BJ (cell line): ENCODE measurements at regions of chr5 and their contacts with region 1.

Region 1: GRCh38 chr5:32076699-32077695 is 97.1 kb downstream of the GOLPH3 start:
- DNase-seq: no peak
- H3K4me3 ChIP-seq: no peak overlapping the region
- H3K27me3 ChIP-seq: 0 out of 2 replicates have a peak, but pooled peaks cover 2% of the 10 kb centered on the region
- CTCF ChIP-seq: peak; percentile 74

Region 2: DNA sequence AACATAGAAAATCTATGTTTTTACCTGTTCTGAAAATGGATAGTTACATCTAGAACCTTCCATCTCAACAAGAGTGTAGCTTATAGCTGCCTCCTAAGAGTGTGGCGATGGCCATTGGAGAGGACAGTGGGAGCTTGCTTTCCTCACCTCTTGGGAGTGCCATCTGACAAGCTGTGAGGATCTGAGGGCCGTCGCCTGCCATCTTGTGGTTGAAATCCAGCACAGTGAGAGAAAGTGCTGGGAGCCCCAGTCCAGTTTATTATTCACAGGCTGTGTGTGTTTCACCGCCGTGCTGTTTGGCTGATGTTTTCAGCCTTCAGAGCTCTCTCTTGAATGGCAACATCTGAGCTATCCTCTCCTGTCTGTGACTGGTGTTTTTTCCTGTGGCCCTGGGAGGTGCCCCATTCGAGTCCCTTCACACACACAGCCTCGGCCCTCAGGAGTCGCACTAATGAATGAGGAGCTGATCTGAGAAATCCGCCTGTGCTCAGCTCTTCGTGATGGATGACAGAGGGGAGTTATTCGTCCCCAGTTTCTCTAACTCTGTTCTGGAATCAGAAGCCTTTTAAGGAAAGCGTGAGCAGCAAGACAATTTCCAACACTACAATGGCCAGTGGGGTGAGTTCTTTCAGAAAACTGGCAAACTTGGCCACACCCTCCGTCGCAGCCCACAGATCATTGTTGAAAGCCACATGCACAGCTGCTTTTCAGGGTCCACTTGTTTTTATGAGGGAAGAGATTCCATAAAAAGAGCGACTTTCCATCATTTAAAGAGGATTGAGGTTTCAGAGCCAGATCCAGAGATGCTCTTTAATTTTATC is 267.7 kb before region 1 on chr5:
- CTCF ChIA-PET with region 1: interaction called, 12 read pairs
- POLR2A ChIA-PET with region 1: no interaction called
- DNase-seq: no peak
- H3K4me3 ChIP-seq: no peak overlapping the region
- H3K27me3 ChIP-seq: peaks cover 7% of the 10 kb centered on the region
- CTCF ChIP-seq: peak; percentile 73

Region 3: DNA sequence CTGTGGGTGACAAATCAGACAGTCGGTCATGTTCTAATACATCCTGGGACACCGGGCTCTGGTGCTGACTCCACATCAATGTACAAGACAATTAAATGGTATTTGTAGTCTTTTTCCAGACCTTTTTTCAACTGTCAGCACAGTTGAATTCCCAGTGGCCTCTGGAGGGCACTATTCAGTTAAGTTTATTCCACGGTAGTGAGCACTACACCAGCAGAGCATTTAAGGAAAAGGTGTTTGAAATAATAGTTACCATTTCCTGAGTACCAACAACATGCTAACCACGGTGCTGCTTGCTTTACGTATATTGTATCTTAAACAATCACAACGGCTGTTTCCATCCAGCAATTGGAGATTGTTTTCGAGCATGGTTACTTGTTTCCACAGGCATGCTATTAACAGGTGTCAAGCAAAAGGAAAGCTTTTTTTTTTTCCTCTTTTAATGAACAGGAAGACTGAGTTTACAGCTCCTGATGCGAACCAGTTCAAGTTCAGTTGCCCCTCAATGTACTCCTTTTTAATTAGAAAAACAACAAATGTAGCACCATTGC is 251.4 kb before region 1 on chr5:
- CTCF ChIA-PET with region 1: interaction called, 170 read pairs
- POLR2A ChIA-PET with region 1: no interaction called
- DNase-seq: peak; percentile 8
- H3K4me3 ChIP-seq: no peak overlapping the region
- H3K27me3 ChIP-seq: peaks cover 8% of the 10 kb centered on the region
- CTCF ChIP-seq: peak; percentile 63

Region 4: DNA sequence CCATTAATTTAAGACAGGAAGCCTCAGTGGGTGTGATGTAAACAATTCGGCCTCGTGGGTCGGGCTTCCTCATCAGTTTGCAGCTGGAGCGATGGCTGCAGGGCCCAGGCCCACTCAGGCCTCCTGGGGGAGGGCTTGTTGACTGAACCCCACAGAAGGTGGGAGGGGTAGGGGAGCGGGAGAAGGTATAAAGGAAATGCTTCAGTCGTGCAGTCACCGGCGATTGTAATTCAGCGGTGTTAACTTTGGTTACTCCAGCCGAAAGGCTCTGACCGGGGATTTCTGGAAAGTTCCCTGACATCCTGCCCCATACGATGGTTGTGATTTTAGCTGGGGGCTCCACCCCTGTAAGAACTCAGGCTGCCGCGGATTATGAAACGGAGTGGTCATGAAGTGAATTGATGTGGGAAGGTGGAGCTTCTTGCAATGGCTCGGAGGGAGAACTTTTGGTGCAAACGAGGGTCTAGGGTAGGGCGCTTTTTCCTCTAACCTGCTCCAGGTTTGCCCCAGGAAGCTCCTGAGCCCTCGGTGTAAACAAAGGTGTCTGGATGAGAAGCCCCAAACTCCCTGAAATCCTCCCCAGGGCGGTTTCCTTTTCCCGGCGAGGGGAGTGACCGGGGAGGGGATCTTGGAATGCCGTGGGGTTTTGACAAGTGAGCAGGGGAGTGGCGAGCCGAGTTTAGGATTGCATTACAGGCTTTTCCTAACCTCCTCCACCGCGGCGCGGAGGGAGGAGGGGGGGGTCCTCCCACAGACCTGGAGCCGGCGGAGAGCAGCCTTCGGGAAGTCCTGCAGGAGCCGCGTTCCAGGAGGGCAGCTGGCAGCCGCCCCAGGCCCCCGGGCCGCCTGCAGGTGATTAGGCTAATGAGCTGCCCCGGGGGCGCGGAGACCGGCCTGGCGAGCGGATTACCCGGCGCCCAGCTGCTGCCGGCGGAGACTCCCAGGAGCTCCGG is 222.5 kb before region 1 on chr5:
- CTCF ChIA-PET with region 1: interaction called, 10 read pairs
- POLR2A ChIA-PET with region 1: no interaction called
- DNase-seq: no peak
- H3K4me3 ChIP-seq: peak overlapping the region; percentile 33
- H3K27me3 ChIP-seq: peaks cover 17% of the 10 kb centered on the region
- CTCF ChIP-seq: no peak

Region 5: GRCh38 chr5:31921852-31922305 is 155.1 kb before region 1 on chr5:
- CTCF ChIA-PET with region 1: interaction called, 36 read pairs
- POLR2A ChIA-PET with region 1: no interaction called
- DNase-seq: no peak
- H3K4me3 ChIP-seq: no peak overlapping the region
- H3K27me3 ChIP-seq: no peaks in the 10 kb centered on the region
- CTCF ChIP-seq: no peak

Region 6: DNA sequence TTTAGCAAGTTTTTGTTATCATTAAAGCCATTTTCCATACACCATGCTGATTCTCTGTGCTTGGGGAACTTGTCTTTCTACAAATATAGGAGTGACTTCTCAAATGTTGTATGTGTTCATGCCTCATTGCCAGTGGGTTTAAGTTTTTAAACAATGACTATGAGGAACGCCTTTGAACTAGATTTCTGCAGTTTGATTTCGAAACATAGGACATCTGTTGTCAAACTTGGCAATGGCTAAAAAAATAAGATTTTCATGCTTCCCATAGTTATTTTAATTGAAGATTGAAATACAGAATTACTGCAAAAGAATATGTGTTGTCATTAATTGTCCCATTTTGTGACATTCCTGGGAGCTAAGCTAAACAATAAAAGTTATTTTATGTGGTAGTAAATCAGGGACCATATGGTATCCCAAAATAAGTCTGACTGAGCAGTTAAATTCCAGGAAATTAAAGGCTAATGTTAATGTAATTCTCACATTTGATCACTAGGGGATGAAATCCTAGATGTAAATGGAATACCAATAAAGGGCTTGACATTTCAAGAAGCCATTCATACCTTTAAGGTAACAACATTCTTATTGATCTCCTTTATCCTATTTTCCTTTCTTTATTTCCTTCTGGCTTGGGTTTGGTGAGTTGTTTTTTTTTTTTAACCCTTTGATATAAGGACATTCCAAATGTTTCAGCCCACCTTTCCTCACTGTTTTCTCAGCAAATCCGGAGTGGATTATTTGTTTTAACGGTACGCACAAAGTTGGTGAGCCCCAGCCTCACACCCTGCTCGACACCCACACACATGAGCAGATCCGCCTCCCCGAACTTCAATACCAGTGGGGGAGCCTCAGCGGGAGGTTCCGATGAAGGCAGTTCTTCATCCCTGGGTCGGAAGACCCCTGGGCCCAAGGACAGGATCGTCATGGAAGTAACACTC is 19.6 kb before region 1 on chr5:
- CTCF ChIA-PET with region 1: interaction called, 18 read pairs
- POLR2A ChIA-PET with region 1: no interaction called
- DNase-seq: no peak
- H3K4me3 ChIP-seq: no peak overlapping the region
- H3K27me3 ChIP-seq: peaks cover 2% of the 10 kb centered on the region; the same call in 1 of the 2 replicates
- CTCF ChIP-seq: peak; percentile 19; the same call in 1 of the 2 replicates

Region 7: GRCh38 chr5:32092938-32093812 is 16.2 kb after region 1 on chr5:
- CTCF ChIA-PET with region 1: interaction called, 25 read pairs
- POLR2A ChIA-PET with region 1: no interaction called
- DNase-seq: no peak
- H3K4me3 ChIP-seq: no peak overlapping the region
- H3K27me3 ChIP-seq: no peaks in the 10 kb centered on the region
- CTCF ChIP-seq: peak; percentile 72

Region 8: GRCh38 chr5:32138839-32139493 is 62.0 kb after region 1 on chr5:
- CTCF ChIA-PET with region 1: no interaction called
- POLR2A ChIA-PET with region 1: no interaction called
- DNase-seq: no peak
- H3K4me3 ChIP-seq: no peak overlapping the region
- H3K27me3 ChIP-seq: no peaks in the 10 kb centered on the region
- CTCF ChIP-seq: no peak